Endothelial cell of umbilical vein (primary cell): ENCODE measurements at regions of chr15 and their contacts with region 1.

Region 1: DNA sequence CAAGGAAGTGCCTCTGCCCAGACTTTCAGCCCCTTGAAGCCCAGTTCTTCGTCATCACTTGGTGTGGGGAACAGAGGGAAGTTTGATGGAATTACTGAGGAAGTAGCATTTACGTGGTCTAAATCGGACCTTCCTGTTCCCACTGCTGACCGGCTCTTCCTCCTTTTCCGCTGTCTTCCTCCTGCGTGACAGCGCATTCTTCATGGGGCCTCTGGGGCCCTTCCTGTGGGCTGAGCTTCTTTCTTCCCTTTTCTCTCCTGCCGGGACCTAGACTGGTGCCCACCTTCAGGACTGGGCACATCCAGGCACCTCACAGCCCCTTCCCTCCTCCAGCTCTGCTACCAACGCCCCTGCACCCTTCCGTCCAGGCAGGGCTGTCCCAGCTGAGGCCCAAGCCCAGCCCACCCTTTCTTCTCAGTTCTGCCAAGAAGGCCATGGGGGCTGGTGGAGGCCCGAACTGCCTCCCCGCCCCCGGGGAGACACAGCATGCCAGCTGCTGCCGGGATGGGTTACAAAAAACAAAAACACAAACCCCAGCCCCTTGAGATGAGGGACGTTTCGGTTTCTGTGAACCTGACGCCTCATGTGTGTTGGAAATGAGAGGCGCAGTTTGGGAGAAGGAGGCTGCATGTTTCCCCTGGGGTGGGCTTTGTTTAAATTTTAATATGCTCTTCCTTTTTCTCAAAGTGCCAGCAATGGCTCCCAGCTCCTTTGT is 19.1 kb downstream of the ZNF710 start:
- DNase-seq: peak; percentile 55
- H3K4me3 ChIP-seq: no peak overlapping the region
- H3K27ac ChIP-seq: peak overlapping the region; percentile 75
- H3K4me1 ChIP-seq: peaks cover 23% of the 10 kb centered on the region
- H3K27me3 ChIP-seq: no peaks in the 10 kb centered on the region
- CTCF ChIP-seq: no peak
- POLR2A ChIP-seq: peak; percentile 39

Region 2: GRCh38 chr15:90064911-90065681 is 44.9 kb after region 1 on chr15:
- CTCF ChIA-PET with region 1: no interaction called
- POLR2A ChIA-PET with region 1: no interaction called
- dilution Hi-C with region 1: no loop called
- intact Hi-C with region 1: loop called (anchors 1 kb)
- DNase-seq: peak; percentile 71
- H3K4me3 ChIP-seq: peak overlapping the region in 1 of 3 experiments; percentile 2
- H3K27ac ChIP-seq: peak overlapping the region; percentile 79
- H3K4me1 ChIP-seq: peaks cover 28% of the 10 kb centered on the region
- H3K27me3 ChIP-seq: no peaks in the 10 kb centered on the region
- CTCF ChIP-seq: no peak
- POLR2A ChIP-seq: no peak